GM10248 (cell line): ENCODE measurements at regions of chr3 and their contacts with region 1.

Region 1: GRCh38 chr3:24662449-24663345 is 168.0 kb upstream of the THRB start:
- DNase-seq: no peak
- CTCF ChIP-seq: no peak

Region 2: GRCh38 chr3:24674261-24674660 is 11.6 kb after region 1 on chr3:
- CTCF ChIA-PET with region 1: interaction called, 10 read pairs
- POLR2A ChIA-PET with region 1: no interaction called
- DNase-seq: no peak
- CTCF ChIP-seq: no peak